ENCODE measurements at regions of chr11 and their contacts with region 1.

Region 1: GRCh38 chr11:71080239-71081097 is 171.9 kb downstream of the SHANK2 start:
- DNase-seq: peak; percentile 64
- H3K4me3 ChIP-seq: no peak overlapping the region
- H3K27ac ChIP-seq: no peak overlapping the region
- H3K4me1 ChIP-seq: no peaks in the 10 kb centered on the region
- H3K27me3 ChIP-seq: no peaks in the 10 kb centered on the region
- CTCF ChIP-seq: peak; percentile 86 to 92

Region 2: DNA sequence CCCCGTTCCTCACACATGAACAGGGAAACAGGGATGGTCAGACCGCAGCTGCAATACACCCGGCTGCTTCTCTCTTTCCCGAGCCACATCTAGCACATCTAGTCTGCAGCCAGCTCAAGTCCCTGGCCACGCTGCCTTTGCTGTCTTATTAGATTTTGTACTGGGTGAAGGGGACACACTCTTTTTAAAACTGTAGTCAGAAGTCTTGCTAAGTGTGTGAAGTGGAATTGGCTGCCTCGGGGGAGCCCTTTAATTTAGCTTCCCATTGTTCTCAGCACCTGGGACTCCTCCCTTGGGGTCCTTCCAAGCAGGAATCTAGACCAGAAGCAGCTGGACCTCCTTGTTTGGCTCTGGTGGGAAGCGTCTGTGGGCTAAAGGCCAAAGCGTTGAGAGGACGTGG is 262.1 kb before region 1 on chr11:
- CTCF ChIA-PET with region 1: no interaction called
- dilution Hi-C with region 1: no loop called
- in situ Hi-C with region 1: no loop called
- intact Hi-C with region 1: loop called (anchors 1 kb)
- DNase-seq: no peak
- H3K4me3 ChIP-seq: no peak overlapping the region
- H3K27ac ChIP-seq: no peak overlapping the region
- H3K4me1 ChIP-seq: no peaks in the 10 kb centered on the region
- H3K27me3 ChIP-seq: no peaks in the 10 kb centered on the region
- CTCF ChIP-seq: no peak

Region 3: GRCh38 chr11:71114124-71114851 is 33.8 kb after region 1 on chr11:
- CTCF ChIA-PET with region 1: no interaction called
- dilution Hi-C with region 1: no loop called
- in situ Hi-C with region 1: no loop called
- intact Hi-C with region 1: no loop called
- DNase-seq: no peak
- H3K4me3 ChIP-seq: no peak overlapping the region
- H3K27ac ChIP-seq: no peak overlapping the region
- H3K4me1 ChIP-seq: no peaks in the 10 kb centered on the region
- H3K27me3 ChIP-seq: no peaks in the 10 kb centered on the region
- CTCF ChIP-seq: no peak

Measured in mammary epithelial cell (primary cell).